ENCODE measurements at regions of chr9 and their contacts with region 1.

Region 1: DNA sequence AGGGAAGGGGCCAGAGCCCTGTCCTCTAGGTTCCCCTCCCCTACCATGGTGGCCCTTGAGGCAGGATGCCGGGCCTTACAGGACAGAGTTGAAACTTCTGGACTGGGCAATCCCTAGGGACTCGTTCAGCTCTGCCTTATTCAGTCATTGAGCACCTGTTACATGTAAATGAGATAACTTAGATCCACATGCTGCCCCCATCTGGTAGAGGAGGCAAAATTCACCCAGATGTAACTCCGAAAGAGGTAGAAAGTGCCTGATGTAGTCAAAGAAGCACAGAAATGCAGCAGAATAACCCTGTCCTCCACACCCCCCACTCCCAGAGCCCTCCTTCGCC is 1.5 kb downstream of the GGTA1 start:
- DNase-seq: peak; percentile 91
- H3K4me3 ChIP-seq: peak overlapping the region; percentile 49
- H3K27ac ChIP-seq: no peak overlapping the region
- H3K4me1 ChIP-seq: peaks cover 13% of the 10 kb centered on the region
- H3K27me3 ChIP-seq: peaks cover 23% of the 10 kb centered on the region
- CTCF ChIP-seq: peak; percentile 84

Region 2: DNA sequence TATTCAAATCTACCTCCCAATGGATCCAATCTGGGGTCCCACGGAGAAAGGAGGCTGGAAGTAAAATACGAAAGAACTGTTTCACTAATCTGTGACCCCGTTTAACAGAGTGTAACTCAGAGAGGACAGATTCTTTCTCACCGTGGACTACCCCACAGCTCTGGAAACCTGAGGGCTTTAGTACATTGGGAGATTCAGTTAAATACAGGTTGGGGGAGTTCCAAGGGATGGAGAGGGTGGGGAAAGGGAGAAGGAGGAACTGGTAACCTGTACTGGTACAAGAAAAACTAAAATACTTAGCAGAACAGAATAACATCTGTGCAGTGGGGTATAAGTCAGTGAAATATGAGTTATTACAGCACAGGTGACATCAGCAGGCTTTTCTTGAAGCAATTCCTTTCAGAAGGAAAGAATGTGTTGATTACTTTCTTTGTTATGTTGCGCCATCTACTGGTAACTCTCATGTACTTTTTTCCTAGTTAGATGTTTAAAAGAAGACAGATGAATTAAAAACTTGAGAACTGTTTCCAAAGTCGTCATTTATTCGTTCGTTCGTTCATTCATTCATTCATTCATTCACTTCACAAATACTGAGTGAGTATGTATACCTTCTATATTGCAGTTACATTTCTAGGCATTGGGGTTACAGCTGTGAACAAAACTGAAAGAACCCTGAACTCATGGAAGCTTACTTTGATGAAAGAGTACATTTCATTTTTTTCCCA is 98.1 kb before region 1 on chr9:
- CTCF ChIA-PET with region 1: no interaction called
- POLR2A ChIA-PET with region 1: no interaction called
- intact Hi-C with region 1: no loop called
- DNase-seq: peak; percentile 80
- H3K4me3 ChIP-seq: no peak overlapping the region
- H3K27ac ChIP-seq: no peak overlapping the region
- H3K4me1 ChIP-seq: no peaks in the 10 kb centered on the region
- H3K27me3 ChIP-seq: no peaks in the 10 kb centered on the region
- CTCF ChIP-seq: peak; percentile 70

Region 3: GRCh38 chr9:121463026-121463807 is 34.9 kb before region 1 on chr9:
- CTCF ChIA-PET with region 1: interaction called, 10 read pairs
- POLR2A ChIA-PET with region 1: no interaction called
- intact Hi-C with region 1: loop called (anchors 2 kb)
- DNase-seq: peak; percentile 71
- H3K4me3 ChIP-seq: no peak overlapping the region
- H3K27ac ChIP-seq: no peak overlapping the region
- H3K4me1 ChIP-seq: peaks cover 3% of the 10 kb centered on the region
- H3K27me3 ChIP-seq: peaks cover 14% of the 10 kb centered on the region
- CTCF ChIP-seq: peak; percentile 88